ENCODE measurements at regions of chr1 and their contacts with region 1.

Region 1: GRCh38 chr1:174982971-174983689 is 16.6 kb upstream of the CACYBP start:
- DNase-seq: peak; percentile 52
- ATAC-seq: peak; percentile 13
- H3K4me3 Mint-ChIP-seq: no peak overlapping the region
- H3K27ac Mint-ChIP-seq: no peak overlapping the region
- H3K4me1 Mint-ChIP-seq: peaks cover 25% of the 10 kb centered on the region
- H3K27me3 Mint-ChIP-seq: no peaks in the 10 kb centered on the region
- CTCF ChIP-seq: peak; percentile 71

Region 2: GRCh38 chr1:174800216-174800851 is 182.8 kb before region 1 on chr1:
- CTCF ChIA-PET with region 1: interaction called, 15 read pairs
- POLR2A ChIA-PET with region 1: interaction called, 3 read pairs
- intact Hi-C with region 1: no loop called
- DNase-seq: peak; percentile 19
- ATAC-seq: no peak
- H3K4me3 Mint-ChIP-seq: no peak overlapping the region
- H3K27ac Mint-ChIP-seq: no peak overlapping the region
- H3K4me1 Mint-ChIP-seq: peaks cover 14% of the 10 kb centered on the region
- H3K27me3 Mint-ChIP-seq: no peaks in the 10 kb centered on the region
- CTCF ChIP-seq: no peak

Region 3: GRCh38 chr1:174964261-174964971 is 18.7 kb before region 1 on chr1:
- CTCF ChIA-PET with region 1: interaction called, 18 read pairs
- POLR2A ChIA-PET with region 1: interaction called, 3 read pairs
- intact Hi-C with region 1: no loop called
- DNase-seq: peak; percentile 34
- ATAC-seq: peak; percentile 79
- H3K4me3 Mint-ChIP-seq: peak overlapping the region; percentile 68
- H3K27ac Mint-ChIP-seq: peak overlapping the region; percentile 84
- H3K4me1 Mint-ChIP-seq: peaks cover 52% of the 10 kb centered on the region
- H3K27me3 Mint-ChIP-seq: no peaks in the 10 kb centered on the region
- CTCF ChIP-seq: no peak